ENCODE measurements at regions of chr15 and their contacts with region 1.

Region 1: DNA sequence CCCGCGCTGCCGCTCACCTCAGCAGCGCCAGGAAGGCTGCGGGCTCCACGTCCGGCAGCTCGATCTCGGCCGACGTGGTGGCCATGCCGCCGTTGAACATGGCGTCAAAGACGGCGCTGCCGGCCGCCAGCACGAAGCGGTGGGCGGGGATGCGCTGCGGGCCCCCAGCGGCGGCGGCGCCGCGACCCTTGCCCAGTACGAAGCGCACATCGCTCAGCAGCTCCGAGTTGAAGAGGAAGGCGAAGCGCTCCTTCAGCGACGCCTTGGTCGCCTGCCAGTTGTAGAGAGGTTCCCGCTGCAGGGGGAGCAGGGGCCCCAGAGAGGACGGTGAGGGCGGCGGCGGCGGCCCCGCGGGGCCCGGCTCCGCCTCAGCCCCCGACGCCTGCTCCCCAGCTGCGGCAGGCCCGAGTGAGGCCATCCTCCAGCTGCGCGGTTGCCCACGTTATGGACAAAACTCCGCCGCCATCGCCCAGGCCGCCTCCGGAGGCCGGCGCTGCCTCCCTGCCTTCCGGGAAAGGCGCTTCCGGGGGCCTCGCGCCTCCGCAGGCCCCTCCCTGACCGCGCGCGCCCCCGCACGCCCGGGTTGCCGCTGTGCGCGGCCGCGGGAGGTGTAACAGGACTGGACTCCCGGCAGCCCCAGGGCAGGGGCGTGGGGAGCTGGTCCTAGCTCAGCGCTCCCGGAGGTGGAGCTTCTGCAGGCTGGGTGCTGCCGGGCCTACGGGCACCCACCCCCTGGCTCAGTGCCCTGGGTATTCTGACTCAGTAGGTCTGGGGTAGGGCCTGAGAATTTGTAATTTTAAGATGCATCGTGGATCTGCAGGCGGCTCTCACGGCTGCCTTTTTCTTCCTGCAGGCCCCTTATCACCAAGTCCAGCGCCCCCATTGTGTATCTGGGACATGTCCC is at the start of gene BTBD1:
- DNase-seq: peak; percentile 96
- H3K4me3 Mint-ChIP-seq: peak within 1 kb of the TSS; percentile 54
- H3K27ac Mint-ChIP-seq: peak within 1 kb of the TSS; percentile 87
- H3K4me1 Mint-ChIP-seq: peaks cover 24% of the 10 kb centered on the region
- H3K27me3 Mint-ChIP-seq: peaks cover 1% of the 10 kb centered on the region
- total RNA-seq, gene BTBD1: 61.7 and 62.7 TPM in 2 replicates

Region 2: GRCh38 chr15:82540055-82540983 is 526.7 kb before region 1 on chr15 and contains the start of gene RPS17:
- intact Hi-C with region 1: loop called (anchors 5 kb)
- DNase-seq: peak; percentile 100
- H3K4me3 Mint-ChIP-seq: peak within 1 kb of the TSS; percentile 86
- H3K27ac Mint-ChIP-seq: peak within 1 kb of the TSS; percentile 92
- H3K4me1 Mint-ChIP-seq: peaks cover 34% of the 10 kb centered on the region
- H3K27me3 Mint-ChIP-seq: peaks cover 9% of the 10 kb centered on the region
- total RNA-seq, gene RPS17: 2,675 and 2,728 TPM in 2 replicates

Region 3: DNA sequence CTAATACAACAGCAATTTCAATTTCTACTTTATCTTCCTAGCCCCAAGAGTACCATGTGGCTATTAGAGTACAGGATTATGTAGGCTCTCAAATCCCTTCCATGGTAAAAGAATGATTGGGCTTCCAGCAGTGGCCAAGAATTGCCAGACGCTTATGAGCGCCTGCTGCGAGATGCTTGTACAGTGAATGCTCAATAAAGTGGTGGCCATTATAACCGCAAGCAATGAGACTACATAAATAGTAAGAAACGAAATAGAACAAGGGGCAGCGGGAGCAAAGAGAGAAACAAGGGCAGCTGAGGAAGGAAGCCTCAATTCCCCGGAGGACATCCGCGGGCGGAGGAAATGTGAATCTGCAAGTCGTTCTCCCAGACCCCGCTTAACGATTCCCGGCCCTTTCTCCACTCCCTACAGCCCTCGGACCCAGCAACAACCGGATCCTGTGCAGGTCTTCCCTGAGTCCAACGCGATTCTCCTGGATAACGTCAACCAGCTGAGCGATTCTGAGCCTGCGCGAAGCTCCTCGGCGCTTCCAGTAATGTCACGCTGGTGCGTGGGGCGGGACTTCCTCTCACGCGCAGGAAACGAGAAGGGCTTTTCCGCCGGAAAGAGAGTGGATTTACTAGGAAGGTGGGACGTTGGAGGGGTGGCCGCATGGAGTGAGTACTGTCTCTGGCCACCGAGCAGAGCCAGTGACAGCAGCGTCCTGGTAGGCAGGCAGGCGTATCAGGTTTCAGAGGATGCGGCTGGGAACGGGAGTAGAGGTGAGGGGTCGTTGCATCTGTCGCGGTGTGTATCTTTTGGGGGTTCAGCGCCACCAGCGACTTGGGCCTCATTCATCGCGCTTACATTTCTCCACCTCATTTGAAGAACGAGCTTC is 316.8 kb before region 1 on chr15:
- intact Hi-C with region 1: loop called (anchors 2 kb)
- DNase-seq: peak; percentile 96
- H3K4me3 Mint-ChIP-seq: peak overlapping the region; percentile 99
- H3K27ac Mint-ChIP-seq: peak overlapping the region; percentile 97
- H3K4me1 Mint-ChIP-seq: peaks cover 23% of the 10 kb centered on the region
- H3K27me3 Mint-ChIP-seq: no peaks in the 10 kb centered on the region

Region 4: GRCh38 chr15:82919231-82919886 is 147.6 kb before region 1 on chr15:
- intact Hi-C with region 1: no loop called
- DNase-seq: no peak
- H3K4me3 Mint-ChIP-seq: no peak overlapping the region
- H3K27ac Mint-ChIP-seq: no peak overlapping the region
- H3K4me1 Mint-ChIP-seq: no peaks in the 10 kb centered on the region
- H3K27me3 Mint-ChIP-seq: peaks cover 5% of the 10 kb centered on the region

Region 5: GRCh38 chr15:83108266-83109226 is 41.6 kb after region 1 on chr15:
- intact Hi-C with region 1: loop called (anchors 5 kb)
- DNase-seq: peak; percentile 81
- H3K4me3 Mint-ChIP-seq: peak overlapping the region; percentile 89
- H3K27ac Mint-ChIP-seq: peak overlapping the region; percentile 54
- H3K4me1 Mint-ChIP-seq: peaks cover 40% of the 10 kb centered on the region
- H3K27me3 Mint-ChIP-seq: peaks cover 23% of the 10 kb centered on the region

Region 6: GRCh38 chr15:83164111-83164770 is 97.3 kb after region 1 on chr15:
- intact Hi-C with region 1: loop called (anchors 2 kb)
- DNase-seq: no peak
- H3K4me3 Mint-ChIP-seq: peak overlapping the region; percentile 67
- H3K27ac Mint-ChIP-seq: peak overlapping the region; percentile 91
- H3K4me1 Mint-ChIP-seq: peaks cover 31% of the 10 kb centered on the region
- H3K27me3 Mint-ChIP-seq: peaks cover 17% of the 10 kb centered on the region

Region 7: GRCh38 chr15:83199288-83199687 is 132.3 kb after region 1 on chr15:
- intact Hi-C with region 1: loop called (anchors 1 kb)
- DNase-seq: no peak
- H3K4me3 Mint-ChIP-seq: peak overlapping the region; percentile 34
- H3K27ac Mint-ChIP-seq: peak overlapping the region; percentile 93
- H3K4me1 Mint-ChIP-seq: peaks cover 36% of the 10 kb centered on the region
- H3K27me3 Mint-ChIP-seq: peaks cover 28% of the 10 kb centered on the region

Measured in activated CD4-positive, alpha-beta T cell treated with anti-CD3 and anti-CD28 coated beads, Interleukin-2, amount 10 ng/mL, durations not matched to agents 24 days and 14 days (primary cell).